ENCODE measurements at regions of chr16 and their contacts with region 1.

Region 1: DNA sequence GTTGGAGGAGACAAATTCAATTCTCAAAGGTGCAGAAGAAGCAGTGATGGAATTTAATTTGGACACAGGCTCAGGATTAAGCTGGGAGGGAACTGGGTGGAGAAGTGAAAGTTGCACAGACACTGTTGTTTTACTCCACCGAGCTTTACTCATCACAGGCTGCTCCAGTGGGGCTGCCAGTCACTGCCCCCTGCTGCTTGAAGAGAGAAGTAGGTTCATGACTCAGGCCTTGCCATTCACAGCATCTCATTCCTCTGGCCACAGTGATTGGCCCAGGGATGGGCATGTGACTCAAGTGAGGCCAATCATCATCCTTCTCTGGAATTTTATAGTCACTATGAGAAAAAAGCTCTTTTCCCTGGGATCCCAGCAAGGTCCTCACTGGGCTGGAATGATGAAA is 11.8 kb downstream of the GNAO1 start:
- DNase-seq: peak; percentile 75
- H3K4me3 Mint-ChIP-seq: no peak overlapping the region
- H3K27ac Mint-ChIP-seq: no peak overlapping the region
- H3K4me1 Mint-ChIP-seq: peaks cover 21% of the 10 kb centered on the region
- H3K27me3 Mint-ChIP-seq: peaks cover 5% of the 10 kb centered on the region

Region 2: DNA sequence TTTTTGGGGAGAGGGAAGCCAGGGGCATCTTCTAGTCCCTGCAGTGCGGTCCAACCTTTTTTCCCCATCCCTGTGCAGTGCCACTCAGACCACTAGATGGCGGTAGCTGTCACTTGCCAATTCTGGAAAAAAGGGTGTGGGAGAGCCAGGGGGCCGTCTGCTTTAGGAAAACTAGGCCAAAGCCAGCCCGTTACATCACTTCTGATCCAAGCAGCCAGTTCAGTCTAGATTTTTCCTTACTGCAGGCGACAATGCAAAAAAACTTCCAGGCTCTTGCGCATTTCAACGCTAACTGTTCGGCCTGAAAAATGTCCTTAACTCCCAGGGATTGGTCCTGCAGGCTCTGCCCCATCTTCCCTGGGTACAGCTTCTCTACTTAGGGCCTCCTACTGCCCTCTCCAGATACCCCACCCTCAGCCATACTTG is 258.7 kb before region 1 on chr16:
- CTCF ChIA-PET with region 1: interaction called, 27 read pairs
- intact Hi-C with region 1: loop called (anchors 1 kb)
- DNase-seq: peak; percentile 62
- H3K4me3 Mint-ChIP-seq: no peak overlapping the region
- H3K27ac Mint-ChIP-seq: no peak overlapping the region
- H3K4me1 Mint-ChIP-seq: no peaks in the 10 kb centered on the region
- H3K27me3 Mint-ChIP-seq: peaks cover 29% of the 10 kb centered on the region

Region 3: GRCh38 chr16:56119133-56119532 is 83.9 kb before region 1 on chr16:
- CTCF ChIA-PET with region 1: interaction called, 3 read pairs
- intact Hi-C with region 1: loop called (anchors 1 kb)
- DNase-seq: no peak
- H3K4me3 Mint-ChIP-seq: no peak overlapping the region
- H3K27ac Mint-ChIP-seq: no peak overlapping the region
- H3K4me1 Mint-ChIP-seq: peaks cover 5% of the 10 kb centered on the region
- H3K27me3 Mint-ChIP-seq: peaks cover 8% of the 10 kb centered on the region

Region 4: DNA sequence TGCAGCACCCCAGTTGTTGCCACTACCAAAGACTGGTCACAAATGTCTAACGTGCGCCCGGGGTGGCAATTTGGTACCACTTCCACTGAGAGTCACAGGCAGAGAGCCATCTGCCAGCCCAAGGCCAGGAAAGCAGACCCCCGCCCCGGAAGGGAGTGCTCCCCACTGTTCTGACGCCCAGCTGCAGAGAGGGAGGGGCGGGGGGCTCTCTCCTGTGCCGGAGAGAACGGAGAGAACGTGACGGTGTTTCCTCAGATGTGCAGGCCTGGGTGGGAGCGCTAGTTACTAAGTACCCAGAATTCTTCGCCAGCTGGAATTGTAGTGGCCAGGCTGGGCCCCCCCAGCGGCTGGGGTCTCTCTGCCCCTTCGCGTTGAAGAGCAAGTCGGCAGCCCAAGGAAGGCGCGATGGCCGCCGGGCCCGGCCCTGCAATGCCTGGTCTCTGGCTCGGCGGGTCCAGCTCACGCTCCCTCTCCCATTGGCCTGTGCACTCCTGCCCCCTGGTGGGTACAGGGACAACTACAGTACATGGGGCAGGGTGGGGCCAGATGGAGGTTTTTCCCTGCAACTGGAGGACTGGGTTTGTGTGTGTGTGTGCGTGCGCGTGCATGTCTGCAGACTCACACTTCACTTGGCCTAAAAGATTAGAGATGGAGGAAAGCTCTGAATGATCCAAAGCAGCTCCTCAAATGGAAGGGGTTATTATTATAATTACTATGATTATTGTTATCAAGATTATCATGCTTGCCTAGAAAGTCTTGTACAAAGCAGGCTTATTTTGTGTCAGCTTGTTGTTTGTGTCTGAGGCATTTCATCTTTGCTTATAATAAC is 115.2 kb after region 1 on chr16:
- CTCF ChIA-PET with region 1: interaction called, 7 read pairs
- intact Hi-C with region 1: loop called (anchors 1 kb)
- DNase-seq: peak; percentile 86
- H3K4me3 Mint-ChIP-seq: peak overlapping the region; percentile 3
- H3K27ac Mint-ChIP-seq: no peak overlapping the region
- H3K4me1 Mint-ChIP-seq: peaks cover 2% of the 10 kb centered on the region
- H3K27me3 Mint-ChIP-seq: no peaks in the 10 kb centered on the region

Region 5: GRCh38 chr16:56450986-56451752 is 248.1 kb after region 1 on chr16 and contains the starts of genes NUDT21 and OGFOD1:
- CTCF ChIA-PET with region 1: no interaction called
- intact Hi-C with region 1: loop called (anchors 2 kb)
- DNase-seq: peak; percentile 96
- H3K4me3 Mint-ChIP-seq: peak within 1 kb of the TSS; percentile 93
- H3K27ac Mint-ChIP-seq: peak within 1 kb of the TSS; percentile 90
- H3K4me1 Mint-ChIP-seq: peaks cover 48% of the 10 kb centered on the region
- H3K27me3 Mint-ChIP-seq: no peaks in the 10 kb centered on the region
- total RNA-seq, gene NUDT21: 324 to 330 TPM
- total RNA-seq, gene OGFOD1: 48.5 to 50.6 TPM